RWPE1 (cell line): ENCODE measurements at regions of chr15 and their contacts with region 1.

Region 1: DNA sequence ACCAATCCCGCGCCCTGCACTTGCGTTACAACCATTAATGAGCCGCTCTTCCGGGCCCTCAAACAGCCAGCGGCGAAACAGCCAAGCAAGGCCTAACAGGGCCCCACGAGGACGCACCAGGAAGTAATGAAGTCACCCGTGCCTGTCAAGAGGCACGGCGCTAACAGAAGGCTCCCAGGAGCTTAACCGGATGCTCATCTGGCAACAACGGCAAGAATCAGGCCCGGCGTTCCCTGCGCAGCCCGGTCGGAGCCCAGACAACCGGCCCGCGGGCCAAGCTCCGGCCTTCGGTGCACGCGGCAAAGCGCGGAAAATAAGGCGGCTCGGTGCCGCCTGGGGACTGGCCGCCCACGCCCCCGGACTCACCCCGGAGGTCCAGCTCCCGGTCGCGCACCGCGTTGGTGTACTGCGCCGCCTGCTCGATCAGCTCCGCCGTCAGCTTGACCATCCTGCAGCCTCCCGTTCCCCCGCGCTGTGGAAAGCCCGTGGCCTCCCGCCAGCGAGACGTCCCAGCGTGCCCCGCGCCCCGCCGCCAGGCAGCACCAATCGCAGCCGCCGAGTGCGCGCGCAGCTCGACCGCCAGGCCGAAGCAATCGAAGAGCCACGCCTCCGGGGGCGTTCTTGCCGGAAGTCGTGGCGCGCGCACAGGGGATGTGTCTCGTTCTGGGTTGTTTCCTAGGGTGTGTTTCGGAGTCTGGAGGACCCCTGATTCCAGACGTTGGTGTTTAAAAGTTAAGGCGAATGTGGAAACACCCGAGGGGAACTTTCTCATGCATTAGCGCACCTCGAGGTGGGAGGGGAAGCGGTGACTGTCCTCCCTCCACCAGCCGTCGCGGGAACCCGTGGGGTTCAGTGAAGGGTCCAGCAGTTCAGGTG is at the start of gene SNRPA1:
- DNase-seq: peak; percentile 97
- H3K27ac ChIP-seq: peak within 1 kb of the TSS; percentile 97
- CTCF ChIP-seq: no peak

Region 2: DNA sequence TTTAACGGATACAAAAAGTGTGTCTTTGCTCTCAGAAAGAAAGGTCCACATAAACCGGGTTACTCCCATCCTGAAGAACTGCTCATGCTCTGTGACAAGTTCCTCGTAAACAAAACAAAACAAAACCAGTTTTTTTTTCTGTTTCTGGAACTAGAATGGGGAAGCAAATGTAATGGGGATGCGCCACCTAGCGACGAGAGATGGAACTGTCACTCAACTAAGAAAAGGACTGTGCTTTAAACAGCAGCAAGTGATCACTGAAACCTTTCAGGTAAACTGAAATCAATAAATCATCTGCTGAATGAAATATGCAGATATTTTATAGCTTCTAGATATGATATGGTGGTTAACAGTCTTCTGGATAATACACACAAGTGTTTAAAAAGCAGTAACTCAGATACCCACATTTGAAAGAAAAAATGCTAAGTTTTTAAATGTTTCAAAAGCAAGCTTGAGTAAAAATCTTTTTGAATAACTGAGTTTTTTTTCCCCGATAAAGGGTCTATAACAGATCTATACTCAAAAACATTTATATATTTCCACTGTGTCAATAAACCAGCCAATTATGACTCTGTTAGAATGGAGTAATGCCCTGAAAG is 346.3 kb after region 1 on chr15:
- CTCF ChIA-PET with region 1: interaction called, 11 read pairs
- POLR2A ChIA-PET with region 1: no interaction called
- DNase-seq: peak; percentile 53
- H3K27ac ChIP-seq: no peak overlapping the region
- CTCF ChIP-seq: peak; percentile 98